ENCODE measurements at regions of chr12 and their contacts with region 1.

Region 1: DNA sequence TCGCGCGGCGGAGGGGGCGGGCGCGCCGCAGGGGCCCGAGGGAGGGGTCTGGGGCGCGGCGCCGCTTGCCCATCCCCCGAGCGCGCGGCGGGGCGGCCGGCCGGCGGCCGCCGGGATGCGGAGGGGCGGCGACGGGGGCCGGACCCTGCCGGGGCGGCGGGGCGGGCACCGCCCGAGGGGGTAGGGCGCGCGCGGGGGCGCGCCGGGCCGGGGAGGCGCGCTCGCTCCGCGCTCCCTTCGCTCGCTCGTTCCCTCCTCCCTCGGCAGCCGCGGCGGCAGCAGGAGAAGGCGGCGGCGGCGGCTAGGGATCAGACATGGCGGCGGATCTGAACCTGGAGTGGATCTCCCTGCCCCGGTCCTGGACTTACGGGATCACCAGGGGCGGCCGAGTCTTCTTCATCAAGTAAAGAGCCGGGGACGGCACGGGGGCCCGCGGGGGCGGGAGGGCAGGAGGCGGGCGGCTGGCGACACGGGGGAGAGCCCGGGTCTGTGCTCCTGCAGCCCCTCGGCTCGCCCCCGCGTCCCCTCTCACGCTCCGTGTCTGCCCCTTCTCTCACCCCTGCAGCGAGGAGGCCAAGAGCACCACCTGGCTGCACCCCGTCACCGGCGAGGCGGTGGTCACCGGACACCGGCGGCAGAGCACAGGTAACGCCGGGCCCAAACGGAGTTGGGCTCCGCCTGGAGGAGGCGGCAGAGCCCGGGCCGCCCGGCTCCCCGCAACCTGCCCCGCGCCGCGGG is at the start of gene PLEKHA5:
- DNase-seq: peak; percentile 32
- H3K4me3 ChIP-seq: peak within 1 kb of the TSS; percentile 96
- H3K27ac ChIP-seq: peak within 1 kb of the TSS; percentile 87
- H3K27me3 ChIP-seq: no peaks in the 10 kb centered on the region
- CTCF ChIP-seq: peak; percentile 17; the same call in 1 of the 2 replicates
- polyA plus RNA-seq, gene PLEKHA5: 19.5 and 23.5 TPM in 2 replicates

Region 2: DNA sequence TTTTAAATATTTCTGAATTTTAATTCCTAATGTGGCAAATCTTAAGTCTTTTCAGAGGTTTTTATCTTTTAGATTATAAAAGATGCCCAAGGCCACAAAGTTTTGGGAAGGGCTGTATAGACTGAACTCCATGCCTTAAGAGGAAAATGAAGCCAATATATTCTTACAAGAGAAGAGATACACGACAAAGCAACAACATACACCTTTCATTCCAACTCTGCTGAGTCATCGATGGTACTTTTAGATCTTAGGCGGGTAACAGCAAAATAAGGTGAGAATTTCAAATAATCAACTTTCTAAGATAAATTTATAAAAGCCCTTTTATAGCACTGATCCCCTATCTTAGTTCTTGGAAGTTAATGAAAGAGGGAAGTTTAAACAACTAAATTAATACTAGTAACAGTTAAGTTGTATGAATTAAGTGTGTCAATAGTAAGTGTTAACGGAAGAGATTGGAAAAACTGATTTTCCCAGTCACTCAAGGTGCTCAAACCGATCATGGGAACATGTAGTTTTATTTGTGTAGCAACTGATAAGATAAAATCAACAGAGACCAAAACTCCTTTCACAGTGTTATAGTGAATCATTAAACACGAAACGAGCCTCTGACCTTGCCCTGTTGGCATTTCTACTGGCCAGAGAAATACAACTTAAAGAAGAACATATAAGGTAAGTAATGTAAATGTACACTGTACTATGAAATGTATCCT is 887.1 kb before region 1 on chr12:
- CTCF ChIA-PET with region 1: no interaction called
- POLR2A ChIA-PET with region 1: interaction called, 11 read pairs
- DNase-seq: no peak
- H3K4me3 ChIP-seq: no peak overlapping the region
- H3K27ac ChIP-seq: no peak overlapping the region
- H3K27me3 ChIP-seq: no peaks in the 10 kb centered on the region
- CTCF ChIP-seq: no peak

Region 3: DNA sequence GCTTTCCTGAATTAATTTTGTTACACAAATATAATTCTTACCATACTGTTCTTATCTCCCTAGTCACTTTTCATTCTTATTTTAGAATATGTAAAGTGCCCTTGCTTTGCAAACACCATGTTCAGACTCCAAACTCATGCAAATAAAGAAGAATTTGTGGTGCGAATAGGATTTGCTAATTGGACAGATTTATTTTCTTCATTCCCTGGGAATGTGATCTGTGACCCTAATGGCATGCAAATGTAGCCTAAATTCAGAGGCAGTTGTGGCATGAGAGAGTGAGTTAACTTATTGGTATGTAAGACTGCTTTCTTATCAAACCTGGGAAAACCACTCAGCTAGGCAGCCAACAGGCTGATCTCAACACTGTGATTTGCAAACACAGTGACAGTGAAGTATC is 381.8 kb before region 1 on chr12:
- CTCF ChIA-PET with region 1: no interaction called
- POLR2A ChIA-PET with region 1: interaction called, 10 read pairs
- DNase-seq: peak; percentile 77
- H3K4me3 ChIP-seq: no peak overlapping the region
- H3K27ac ChIP-seq: peak overlapping the region; percentile 13
- H3K27me3 ChIP-seq: no peaks in the 10 kb centered on the region
- CTCF ChIP-seq: no peak

Region 4: DNA sequence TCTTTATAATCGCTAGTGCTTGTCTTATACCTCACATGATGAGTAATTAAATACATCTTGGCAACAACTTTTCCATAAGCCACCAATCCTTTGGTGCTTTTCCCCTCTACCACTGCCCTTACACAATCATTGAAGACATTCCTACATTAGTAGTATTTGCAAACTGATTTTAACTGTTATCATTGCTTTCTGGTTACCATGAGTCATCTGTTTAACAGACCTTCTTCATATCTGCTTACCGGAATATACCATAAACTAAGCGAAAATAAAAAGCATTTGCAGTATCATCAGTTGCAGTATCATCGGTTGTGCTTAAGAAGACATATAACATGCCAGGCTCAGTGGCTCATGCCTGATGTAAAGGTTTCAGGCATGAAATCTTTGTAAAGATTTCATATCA is 55.0 kb before region 1 on chr12:
- CTCF ChIA-PET with region 1: no interaction called
- POLR2A ChIA-PET with region 1: no interaction called
- DNase-seq: peak; percentile 27
- H3K4me3 ChIP-seq: no peak overlapping the region
- H3K27ac ChIP-seq: no peak overlapping the region
- H3K27me3 ChIP-seq: no peaks in the 10 kb centered on the region
- CTCF ChIP-seq: no peak

Region 5: DNA sequence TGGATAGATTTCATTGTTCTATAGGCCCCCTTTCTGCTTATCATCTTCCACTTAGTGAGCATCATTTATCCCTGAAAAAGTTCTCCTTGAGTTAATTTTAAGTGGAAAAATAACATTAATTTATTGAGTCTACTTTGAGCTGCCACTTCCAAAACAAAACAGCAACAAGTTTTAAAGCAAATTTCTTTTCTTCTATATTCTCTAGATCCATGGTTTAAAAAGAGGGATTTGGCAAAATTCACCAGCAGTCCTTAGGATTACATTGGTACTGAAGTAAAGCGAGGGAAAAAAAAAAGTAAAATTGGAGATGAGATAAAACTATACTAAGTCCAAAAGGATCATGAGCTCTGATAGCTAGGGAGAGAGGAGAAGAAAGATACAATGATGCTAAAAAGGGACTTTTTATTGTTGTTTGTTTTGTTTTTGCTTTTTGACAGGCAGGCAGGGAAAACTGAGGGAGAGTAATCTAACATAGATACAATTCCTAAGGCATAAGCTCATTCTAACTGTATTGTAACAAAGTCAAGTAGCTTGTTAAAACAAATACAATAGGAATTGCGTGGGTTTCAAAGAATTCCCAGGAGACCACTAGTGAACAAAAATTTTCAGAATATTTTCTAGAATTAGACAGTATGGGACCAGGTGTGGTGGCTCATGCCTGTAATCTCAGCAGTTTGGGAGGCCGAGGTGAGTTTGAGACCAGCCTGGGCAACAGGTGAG is 19.3 kb before region 1 on chr12:
- CTCF ChIA-PET with region 1: no interaction called
- POLR2A ChIA-PET with region 1: no interaction called
- DNase-seq: no peak
- H3K4me3 ChIP-seq: no peak overlapping the region
- H3K27ac ChIP-seq: no peak overlapping the region
- H3K27me3 ChIP-seq: no peaks in the 10 kb centered on the region
- CTCF ChIP-seq: no peak

Region 6: GRCh38 chr12:19165451-19165850 is 35.8 kb after region 1 on chr12:
- CTCF ChIA-PET with region 1: no interaction called
- POLR2A ChIA-PET with region 1: no interaction called
- DNase-seq: no peak
- H3K4me3 ChIP-seq: no peak overlapping the region
- H3K27ac ChIP-seq: no peak overlapping the region
- H3K27me3 ChIP-seq: no peaks in the 10 kb centered on the region
- CTCF ChIP-seq: no peak

Measured in AG04450 (cell line).